ENCODE measurements at regions of chr5 and their contacts with region 1.

Region 1: DNA sequence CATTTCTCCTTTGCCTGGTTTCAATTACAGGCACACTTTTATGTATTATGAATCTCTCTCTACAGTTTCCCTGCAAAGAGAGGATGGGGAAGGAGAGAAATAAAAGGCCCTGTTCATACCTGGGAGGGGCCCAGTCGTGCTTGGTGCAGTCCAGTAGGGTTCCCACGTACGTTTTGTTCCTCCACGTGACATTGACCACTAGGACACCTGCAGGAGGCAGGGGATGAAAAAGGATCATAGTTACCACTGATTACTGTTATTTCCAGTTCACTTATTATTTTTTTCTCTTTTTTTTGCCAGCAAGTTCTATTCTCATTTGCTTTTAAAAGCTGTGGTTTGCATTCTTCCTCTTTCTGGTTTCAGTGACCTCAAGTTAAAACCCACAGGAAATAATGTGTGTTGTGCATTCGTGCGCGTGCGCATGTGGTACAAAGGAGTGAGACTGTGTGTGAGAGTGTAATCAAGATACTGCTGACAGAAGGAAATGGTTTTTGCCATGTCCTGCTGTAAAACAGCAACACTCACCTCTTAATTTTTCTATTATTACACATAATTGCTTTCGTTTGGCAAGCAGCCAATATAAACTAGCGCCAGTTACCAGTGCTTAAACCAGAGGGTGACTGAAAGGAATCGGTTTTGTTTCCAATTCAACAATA is 96.8 kb downstream of the ZNF608 start:
- DNase-seq: peak; percentile 96
- ATAC-seq: peak; percentile 74
- H3K4me3 ChIP-seq: peak overlapping the region; percentile 1 to 54 (median 25)
- H3K4me3 Mint-ChIP-seq: peak overlapping the region; percentile 38
- H3K27ac ChIP-seq: peak overlapping the region; percentile 76 to 84
- H3K27ac Mint-ChIP-seq: peak overlapping the region; percentile 88
- H3K4me1 ChIP-seq: peaks cover 70 to 88% of the 10 kb centered on the region in 2 donors
- H3K4me1 Mint-ChIP-seq: peaks cover 84% of the 10 kb centered on the region
- H3K27me3 ChIP-seq: peaks cover 0 to 24% (median 0%) of the 10 kb centered on the region in 4 experiments
- H3K27me3 Mint-ChIP-seq: no peaks in the 10 kb centered on the region
- CTCF ChIP-seq: no peak

Region 2: DNA sequence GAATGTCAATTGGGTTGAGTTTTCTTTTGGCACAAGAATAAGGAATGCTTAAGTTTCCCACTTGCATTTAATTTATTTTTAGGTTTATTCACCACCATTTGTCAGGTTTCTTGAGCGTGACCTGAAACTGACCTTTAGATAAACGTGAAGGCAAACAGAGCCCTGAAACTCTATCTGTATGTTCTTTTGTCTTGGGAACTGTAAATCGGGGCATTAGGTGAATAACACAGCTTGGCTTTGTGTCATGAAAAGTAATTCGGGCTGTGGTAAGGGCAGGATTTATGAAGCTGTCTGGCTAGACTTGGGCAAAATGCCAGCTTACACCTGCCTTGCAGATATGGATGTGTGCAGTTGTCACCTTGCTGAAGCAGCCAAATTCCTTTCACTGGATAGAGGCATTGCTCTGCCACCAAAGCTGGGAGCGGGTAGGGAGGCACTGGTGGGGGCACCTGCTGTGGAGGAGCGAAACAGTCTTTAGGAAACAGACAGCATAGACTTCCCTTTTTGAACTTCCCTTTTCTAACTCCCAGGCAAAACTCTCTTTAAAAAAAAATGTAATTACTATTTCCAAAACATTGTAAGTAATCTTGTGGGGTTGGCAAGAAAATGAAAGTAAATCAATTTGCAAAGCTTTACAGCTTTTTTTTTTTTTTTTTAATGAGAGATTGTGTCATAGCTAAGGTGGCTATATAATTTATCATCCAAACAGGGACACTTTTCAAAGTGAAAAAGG is 592.5 kb before region 1 on chr5:
- CTCF ChIA-PET with region 1: no interaction called
- POLR2A ChIA-PET with region 1: no interaction called
- intact Hi-C with region 1: loop called (anchors 1 kb)
- DNase-seq: peak; percentile 88
- ATAC-seq: peak; percentile 85
- H3K4me3 ChIP-seq: peak overlapping the region; percentile 30 to 57 (median 54)
- H3K4me3 Mint-ChIP-seq: peak overlapping the region; percentile 94
- H3K27ac ChIP-seq: peak overlapping the region; percentile 71 to 72
- H3K27ac Mint-ChIP-seq: peak overlapping the region; percentile 95
- H3K4me1 ChIP-seq: peaks cover 40 to 45% of the 10 kb centered on the region in 2 donors
- H3K4me1 Mint-ChIP-seq: peaks cover 56% of the 10 kb centered on the region
- H3K27me3 ChIP-seq: no peaks in the 10 kb centered on the region
- H3K27me3 Mint-ChIP-seq: no peaks in the 10 kb centered on the region
- CTCF ChIP-seq: no peak

Region 3: DNA sequence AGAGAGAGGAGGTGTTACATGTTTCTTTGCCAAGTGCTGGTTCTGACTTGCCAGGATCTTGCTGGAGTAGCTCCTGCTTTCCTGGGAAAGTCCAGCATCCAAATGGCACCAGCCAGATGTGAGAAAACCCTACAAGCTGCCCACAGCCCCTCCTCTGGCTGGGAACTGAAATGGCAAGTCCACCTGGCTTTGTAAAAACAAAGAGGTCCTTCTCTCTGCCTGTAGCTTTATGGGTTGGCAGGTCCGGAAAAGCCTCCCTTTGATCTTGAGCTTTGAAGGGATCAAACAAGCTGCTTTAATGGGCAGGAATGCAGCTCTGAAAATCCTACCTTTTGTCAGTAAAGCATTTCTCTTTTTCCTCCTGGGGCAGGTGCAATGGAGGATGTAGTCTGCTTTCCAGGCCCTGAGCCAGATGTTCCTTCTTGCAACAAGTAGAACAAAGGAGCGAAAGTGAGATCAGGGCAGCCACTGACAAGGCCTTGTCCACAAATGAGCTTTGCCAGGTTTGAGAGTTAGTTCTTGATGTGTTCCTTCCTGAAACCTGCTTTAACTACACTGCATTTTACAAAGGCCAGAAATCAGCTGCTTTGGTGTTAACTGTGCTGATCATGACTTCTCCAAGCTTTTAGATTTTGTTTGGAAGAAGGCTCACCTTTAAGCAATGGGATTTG is 359.8 kb before region 1 on chr5:
- CTCF ChIA-PET with region 1: no interaction called
- POLR2A ChIA-PET with region 1: no interaction called
- intact Hi-C with region 1: no loop called
- DNase-seq: no peak
- ATAC-seq: no peak
- H3K4me3 ChIP-seq: no peak overlapping the region
- H3K4me3 Mint-ChIP-seq: no peak overlapping the region
- H3K27ac ChIP-seq: no peak overlapping the region
- H3K27ac Mint-ChIP-seq: no peak overlapping the region
- H3K4me1 ChIP-seq: no peaks in the 10 kb centered on the region
- H3K4me1 Mint-ChIP-seq: no peaks in the 10 kb centered on the region
- H3K27me3 ChIP-seq: no peaks in the 10 kb centered on the region
- H3K27me3 Mint-ChIP-seq: no peaks in the 10 kb centered on the region
- CTCF ChIP-seq: no peak

Region 4: GRCh38 chr5:124453221-124454051 is 196.2 kb before region 1 on chr5:
- CTCF ChIA-PET with region 1: no interaction called
- POLR2A ChIA-PET with region 1: no interaction called
- intact Hi-C with region 1: loop called (anchors 1 kb)
- DNase-seq: peak; percentile 73
- ATAC-seq: peak; percentile 95
- H3K4me3 ChIP-seq: no peak overlapping the region
- H3K4me3 Mint-ChIP-seq: peak overlapping the region; percentile 80
- H3K27ac ChIP-seq: peak overlapping the region in 1 of 2 donors; percentile 22
- H3K27ac Mint-ChIP-seq: peak overlapping the region; percentile 83
- H3K4me1 ChIP-seq: peaks cover 28 to 29% of the 10 kb centered on the region in 2 donors
- H3K4me1 Mint-ChIP-seq: peaks cover 32% of the 10 kb centered on the region
- H3K27me3 ChIP-seq: no peaks in the 10 kb centered on the region
- H3K27me3 Mint-ChIP-seq: no peaks in the 10 kb centered on the region
- CTCF ChIP-seq: no peak

Region 5: GRCh38 chr5:124583469-124584350 is 65.9 kb before region 1 on chr5:
- CTCF ChIA-PET with region 1: interaction called, 10 read pairs
- POLR2A ChIA-PET with region 1: no interaction called
- intact Hi-C with region 1: loop called (anchors 1 kb)
- DNase-seq: peak; percentile 84
- ATAC-seq: peak; percentile 94
- H3K4me3 ChIP-seq: peak overlapping the region in 3 of 5 experiments; percentile 13 to 33 (median 21)
- H3K4me3 Mint-ChIP-seq: peak overlapping the region; percentile 74
- H3K27ac ChIP-seq: peak overlapping the region; percentile 56 to 60
- H3K27ac Mint-ChIP-seq: peak overlapping the region; percentile 89
- H3K4me1 ChIP-seq: peaks cover 19 to 27% of the 10 kb centered on the region in 2 donors
- H3K4me1 Mint-ChIP-seq: peaks cover 32% of the 10 kb centered on the region
- H3K27me3 ChIP-seq: no peaks in the 10 kb centered on the region
- H3K27me3 Mint-ChIP-seq: no peaks in the 10 kb centered on the region
- CTCF ChIP-seq: no peak

Region 6: GRCh38 chr5:124706729-124707361 is 57.2 kb after region 1 on chr5:
- CTCF ChIA-PET with region 1: no interaction called
- POLR2A ChIA-PET with region 1: interaction called, 3 read pairs
- intact Hi-C with region 1: loop called (anchors 1 kb)
- DNase-seq: peak; percentile 19
- ATAC-seq: no peak
- H3K4me3 ChIP-seq: peak overlapping the region in 2 of 5 experiments; percentile 24 to 30
- H3K4me3 Mint-ChIP-seq: peak overlapping the region; percentile 80
- H3K27ac ChIP-seq: peak overlapping the region; percentile 57 to 71
- H3K27ac Mint-ChIP-seq: peak overlapping the region; percentile 87
- H3K4me1 ChIP-seq: peaks cover 66 to 67% of the 10 kb centered on the region in 2 donors
- H3K4me1 Mint-ChIP-seq: peaks cover 82% of the 10 kb centered on the region
- H3K27me3 ChIP-seq: peaks cover 0 to 8% (median 0%) of the 10 kb centered on the region in 4 experiments
- H3K27me3 Mint-ChIP-seq: no peaks in the 10 kb centered on the region
- CTCF ChIP-seq: no peak